Activated T-helper 1 cell treated with anti-CD3 and anti-CD28 coated beads, Interleukin-12 subunit alpha, Interleukin-12 subunit beta, Interleukin-2, Interleukin-4 antibody, amounts not matched to agents 30 ng/mL and 10 ng/mL and 1 ng/mL, durations not matched to agents 14 hours and 24 hours and 36 hours (primary cell): ENCODE measurements at regions of chr3 and their contacts with region 1.

Region 1: GRCh38 chr3:150220799-150221198 is 187.3 kb upstream of the TSC22D2 start:
- DNase-seq: no peak
- H3K4me3 Mint-ChIP-seq: no peak overlapping the region
- H3K27ac Mint-ChIP-seq: no peak overlapping the region
- H3K4me1 Mint-ChIP-seq: no peaks in the 10 kb centered on the region
- H3K27me3 Mint-ChIP-seq: peaks cover 19% of the 10 kb centered on the region

Region 2: DNA sequence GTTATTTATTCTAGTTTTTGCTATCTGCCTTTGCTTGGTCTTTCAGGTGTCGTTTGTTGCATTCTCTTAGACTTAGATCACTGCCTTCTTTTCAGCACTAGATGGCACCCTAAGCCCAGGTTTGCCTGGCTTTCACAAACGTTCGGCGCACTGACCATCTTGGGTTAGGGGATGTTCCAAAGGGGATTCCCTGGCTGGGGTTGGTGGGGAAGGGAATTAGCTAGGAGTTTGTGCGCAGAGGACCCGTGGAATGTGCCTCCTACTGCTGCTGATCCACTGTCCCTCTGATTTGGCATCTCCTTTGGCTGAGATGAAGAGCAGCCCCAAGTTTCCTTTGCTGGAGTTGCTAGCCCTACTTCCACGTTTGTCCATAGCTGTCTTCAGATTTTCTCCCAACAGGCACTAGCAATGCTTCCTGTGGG is 284.0 kb before region 1 on chr3:
- intact Hi-C with region 1: loop called (anchors 1 kb)
- DNase-seq: no peak
- H3K4me3 Mint-ChIP-seq: no peak overlapping the region
- H3K27ac Mint-ChIP-seq: no peak overlapping the region
- H3K4me1 Mint-ChIP-seq: peaks cover 7% of the 10 kb centered on the region
- H3K27me3 Mint-ChIP-seq: no peaks in the 10 kb centered on the region